CD8-positive, alpha-beta T cell (primary cell): ENCODE measurements at regions of chr10 and their contacts with region 1.

Region 1: GRCh38 chr10:122953827-122954730 is at the start of gene C10orf88:
- DNase-seq: peak; percentile 95 to 100 (median 97)
- ATAC-seq: peak; percentile 91
- H3K4me3 ChIP-seq: peak within 1 kb of the TSS; percentile 67 to 82
- H3K4me3 Mint-ChIP-seq: peak within 1 kb of the TSS; percentile 86
- H3K27ac ChIP-seq: peak within 1 kb of the TSS; percentile 36 to 72
- H3K27ac Mint-ChIP-seq: peak within 1 kb of the TSS; percentile 86
- H3K4me1 ChIP-seq: peaks cover 21% of the 10 kb centered on the region
- H3K4me1 Mint-ChIP-seq: peaks cover 46% of the 10 kb centered on the region
- H3K27me3 ChIP-seq: no peaks in the 10 kb centered on the region
- H3K27me3 Mint-ChIP-seq: no peaks in the 10 kb centered on the region
- CTCF ChIP-seq: no peak
- total RNA-seq, gene C10orf88: 2.2 to 2.8 TPM

Region 2: GRCh38 chr10:121927841-121928527 is 1026.1 kb before region 1 on chr10 and contains the start of gene ATE1:
- CTCF ChIA-PET with region 1: no interaction called
- POLR2A ChIA-PET with region 1: no interaction called
- intact Hi-C with region 1: loop called in 1 of 2 experiments (anchors 10 kb)
- DNase-seq: peak; percentile 68 to 91 (median 81)
- ATAC-seq: peak; percentile 90
- H3K4me3 ChIP-seq: peak within 1 kb of the TSS; percentile 72 to 87
- H3K4me3 Mint-ChIP-seq: peak within 1 kb of the TSS; percentile 91
- H3K27ac ChIP-seq: peak within 1 kb of the TSS; percentile 91 to 94
- H3K27ac Mint-ChIP-seq: peak within 1 kb of the TSS; percentile 97
- H3K4me1 ChIP-seq: peaks cover 14% of the 10 kb centered on the region
- H3K4me1 Mint-ChIP-seq: peaks cover 30% of the 10 kb centered on the region
- H3K27me3 ChIP-seq: no peaks in the 10 kb centered on the region
- H3K27me3 Mint-ChIP-seq: no peaks in the 10 kb centered on the region
- CTCF ChIP-seq: no peak
- total RNA-seq, gene ATE1: 11.6 to 14.6 TPM

Region 3: GRCh38 chr10:121974535-121975294 is 979.4 kb before region 1 on chr10 and contains the start of gene NSMCE4A:
- CTCF ChIA-PET with region 1: no interaction called
- POLR2A ChIA-PET with region 1: no interaction called
- intact Hi-C with region 1: loop called in 1 of 2 experiments (anchors 5 kb)
- DNase-seq: peak; percentile 43 to 84 (median 69)
- ATAC-seq: peak; percentile 84
- H3K4me3 ChIP-seq: peak within 1 kb of the TSS; percentile 64 to 86
- H3K4me3 Mint-ChIP-seq: peak within 1 kb of the TSS; percentile 81
- H3K27ac ChIP-seq: peak within 1 kb of the TSS; percentile 62 to 76
- H3K27ac Mint-ChIP-seq: peak within 1 kb of the TSS; percentile 37
- H3K4me1 ChIP-seq: peaks cover 18% of the 10 kb centered on the region
- H3K4me1 Mint-ChIP-seq: peaks cover 25% of the 10 kb centered on the region
- H3K27me3 ChIP-seq: no peaks in the 10 kb centered on the region
- H3K27me3 Mint-ChIP-seq: no peaks in the 10 kb centered on the region
- CTCF ChIP-seq: peak; percentile 28
- total RNA-seq, gene NSMCE4A: 34.0 to 37.2 TPM

Region 4: DNA sequence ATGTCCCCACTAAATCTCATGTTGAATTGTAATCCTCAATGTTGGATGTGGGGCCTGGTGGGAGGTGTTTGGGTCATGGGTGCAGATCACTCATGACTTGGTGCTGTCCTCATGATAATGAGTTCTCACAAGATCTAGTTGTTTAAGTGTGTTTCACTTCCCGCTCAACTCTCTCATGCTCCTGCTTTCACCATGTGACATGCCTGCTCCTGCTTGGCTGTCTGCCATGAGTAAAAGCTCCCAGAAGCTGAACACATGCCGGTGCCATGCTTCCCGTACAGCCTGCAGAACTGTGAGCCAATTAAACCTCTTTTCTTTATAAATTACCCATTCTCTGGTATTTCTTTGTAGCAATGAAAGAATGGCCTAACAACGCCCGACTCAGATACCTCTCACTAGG is 19.9 kb after region 1 on chr10:
- CTCF ChIA-PET with region 1: interaction called, 5 read pairs
- POLR2A ChIA-PET with region 1: no interaction called
- intact Hi-C with region 1: loop called in 1 of 2 experiments (anchors 1 kb)
- DNase-seq: no peak
- ATAC-seq: no peak
- H3K4me3 ChIP-seq: no peak overlapping the region
- H3K4me3 Mint-ChIP-seq: no peak overlapping the region
- H3K27ac ChIP-seq: no peak overlapping the region
- H3K27ac Mint-ChIP-seq: no peak overlapping the region
- H3K4me1 ChIP-seq: no peaks in the 10 kb centered on the region
- H3K4me1 Mint-ChIP-seq: no peaks in the 10 kb centered on the region
- H3K27me3 ChIP-seq: no peaks in the 10 kb centered on the region
- H3K27me3 Mint-ChIP-seq: peaks cover 12% of the 10 kb centered on the region
- CTCF ChIP-seq: no peak

Region 5: GRCh38 chr10:122980209-122981065 is 26.4 kb after region 1 on chr10 and contains the start of gene PSTK:
- CTCF ChIA-PET with region 1: interaction called, 7 read pairs
- POLR2A ChIA-PET with region 1: interaction called, 18 read pairs
- intact Hi-C with region 1: loop called (anchors 1 kb)
- DNase-seq: peak; percentile 78 to 96 (median 86)
- ATAC-seq: peak; percentile 96
- H3K4me3 ChIP-seq: peak within 1 kb of the TSS; percentile 86 to 93
- H3K4me3 Mint-ChIP-seq: peak within 1 kb of the TSS; percentile 95
- H3K27ac ChIP-seq: peak within 1 kb of the TSS; percentile 96 to 97
- H3K27ac Mint-ChIP-seq: peak within 1 kb of the TSS; percentile 98
- H3K4me1 ChIP-seq: peaks cover 12% of the 10 kb centered on the region
- H3K4me1 Mint-ChIP-seq: peaks cover 19% of the 10 kb centered on the region
- H3K27me3 ChIP-seq: no peaks in the 10 kb centered on the region
- H3K27me3 Mint-ChIP-seq: peaks cover 4% of the 10 kb centered on the region
- CTCF ChIP-seq: peak; percentile 91
- total RNA-seq, gene PSTK: 20.5 to 20.9 TPM

Region 6: DNA sequence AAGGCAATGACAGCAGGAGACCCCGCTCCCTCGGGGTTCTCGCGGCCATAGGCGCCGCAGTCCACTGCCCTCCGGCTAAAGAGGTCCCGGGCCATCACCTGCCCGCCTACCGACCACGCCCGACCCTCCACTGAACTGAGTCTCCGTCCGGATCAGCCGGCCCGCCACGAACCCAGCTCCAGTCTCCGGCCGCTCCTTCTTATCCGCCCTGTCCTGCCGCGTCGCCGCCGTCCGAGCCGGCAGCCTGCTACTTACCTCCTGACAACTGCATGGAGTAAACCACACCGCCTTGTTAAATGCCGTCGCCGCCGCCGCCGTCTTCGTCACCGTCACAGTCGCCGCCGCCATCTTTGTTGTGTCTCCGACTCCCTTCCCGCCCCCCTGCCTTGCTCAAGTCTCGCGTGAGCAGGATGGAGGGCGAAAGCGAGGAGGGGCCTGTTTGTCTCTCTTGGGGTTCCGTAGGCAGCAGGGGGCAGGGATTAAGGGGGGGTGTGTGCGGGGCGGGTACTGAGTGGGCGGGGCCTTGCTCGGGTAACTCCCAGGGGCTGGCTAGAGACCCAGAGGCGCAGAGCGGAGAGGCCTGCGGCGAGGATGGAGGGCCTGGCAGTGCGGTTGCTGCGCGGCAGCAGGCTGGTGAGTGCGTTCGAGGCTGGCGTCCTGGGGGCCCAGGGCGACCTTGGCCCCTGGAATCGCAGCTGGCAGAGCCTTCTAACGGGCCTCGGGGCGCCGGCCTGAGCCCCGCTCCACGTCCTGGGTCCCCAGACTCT is 54.5 kb after region 1 on chr10 and contains the starts of genes ACADSB and IKZF5:
- CTCF ChIA-PET with region 1: interaction called, 3 read pairs
- POLR2A ChIA-PET with region 1: interaction called, 19 read pairs
- intact Hi-C with region 1: loop called (anchors 1 kb)
- DNase-seq: peak; percentile 92 to 99 (median 96)
- ATAC-seq: peak; percentile 89
- H3K4me3 ChIP-seq: peak within 1 kb of the TSS; percentile 89 to 100
- H3K4me3 Mint-ChIP-seq: peak within 1 kb of the TSS; percentile 97
- H3K27ac ChIP-seq: peak within 1 kb of the TSS; percentile 98 to 99
- H3K27ac Mint-ChIP-seq: peak within 1 kb of the TSS; percentile 99
- H3K4me1 ChIP-seq: peaks cover 48% of the 10 kb centered on the region
- H3K4me1 Mint-ChIP-seq: peaks cover 62% of the 10 kb centered on the region
- H3K27me3 ChIP-seq: no peaks in the 10 kb centered on the region
- H3K27me3 Mint-ChIP-seq: no peaks in the 10 kb centered on the region
- CTCF ChIP-seq: no peak
- total RNA-seq, gene ACADSB: 18.2 to 18.5 TPM
- total RNA-seq, gene IKZF5: 89.5 to 96.1 TPM

Region 7: GRCh38 chr10:123241391-123242141 is 287.5 kb after region 1 on chr10:
- CTCF ChIA-PET with region 1: no interaction called
- POLR2A ChIA-PET with region 1: no interaction called
- intact Hi-C with region 1: loop called in 1 of 2 experiments (anchors 5 kb)
- DNase-seq: peak; percentile 7 to 86 (median 57)
- ATAC-seq: peak; percentile 91
- H3K4me3 ChIP-seq: peak overlapping the region in 1 of 2 experiments; percentile 14
- H3K4me3 Mint-ChIP-seq: peak overlapping the region; percentile 59
- H3K27ac ChIP-seq: peak overlapping the region; percentile 90 to 92
- H3K27ac Mint-ChIP-seq: peak overlapping the region; percentile 99
- H3K4me1 ChIP-seq: peaks cover 24% of the 10 kb centered on the region
- H3K4me1 Mint-ChIP-seq: peaks cover 31% of the 10 kb centered on the region
- H3K27me3 ChIP-seq: no peaks in the 10 kb centered on the region
- H3K27me3 Mint-ChIP-seq: no peaks in the 10 kb centered on the region
- CTCF ChIP-seq: no peak